Ascending aorta (tissue), 2 donors: ENCODE measurements at regions of chr7 and their contacts with region 1.

Region 1: GRCh38 chr7:25851332-25852210 is 300.4 kb upstream of the NFE2L3 start:
- DNase-seq: peak; percentile 62 to 92
- H3K4me3 ChIP-seq: peak overlapping the region; percentile 27 to 53
- H3K27ac ChIP-seq: peak overlapping the region; percentile 65 to 76
- H3K4me1 ChIP-seq: peaks cover 27 to 54% of the 10 kb centered on the region in 2 donors
- H3K27me3 ChIP-seq: no peaks in the 10 kb centered on the region
- CTCF ChIP-seq: peak; percentile 85 to 89 (median 88)

Region 2: GRCh38 chr7:24979863-24980533 is 871.6 kb before region 1 on chr7 and contains the start of gene OSBPL3:
- intact Hi-C with region 1: loop called (anchors 10 kb)
- DNase-seq: peak; percentile 77 to 97
- H3K4me3 ChIP-seq: peak within 1 kb of the TSS; percentile 66 to 94
- H3K27ac ChIP-seq: peak within 1 kb of the TSS; percentile 66 to 83
- H3K4me1 ChIP-seq: peaks cover 0 to 3% of the 10 kb centered on the region in 2 donors
- H3K27me3 ChIP-seq: no peaks in the 10 kb centered on the region
- CTCF ChIP-seq: no peak
- total RNA-seq, gene OSBPL3: 0.96 TPM

Region 3: GRCh38 chr7:25240340-25240739 is 611.2 kb before region 1 on chr7:
- intact Hi-C with region 1: loop called (anchors 5 kb)
- DNase-seq: peak in 1 of 2 donors; percentile 71
- H3K4me3 ChIP-seq: peak overlapping the region in 1 of 2 donors; percentile 29
- H3K27ac ChIP-seq: no peak overlapping the region
- H3K4me1 ChIP-seq: peaks cover 2 to 14% of the 10 kb centered on the region in 2 donors
- H3K27me3 ChIP-seq: no peaks in the 10 kb centered on the region
- CTCF ChIP-seq: no peak

Region 4: DNA sequence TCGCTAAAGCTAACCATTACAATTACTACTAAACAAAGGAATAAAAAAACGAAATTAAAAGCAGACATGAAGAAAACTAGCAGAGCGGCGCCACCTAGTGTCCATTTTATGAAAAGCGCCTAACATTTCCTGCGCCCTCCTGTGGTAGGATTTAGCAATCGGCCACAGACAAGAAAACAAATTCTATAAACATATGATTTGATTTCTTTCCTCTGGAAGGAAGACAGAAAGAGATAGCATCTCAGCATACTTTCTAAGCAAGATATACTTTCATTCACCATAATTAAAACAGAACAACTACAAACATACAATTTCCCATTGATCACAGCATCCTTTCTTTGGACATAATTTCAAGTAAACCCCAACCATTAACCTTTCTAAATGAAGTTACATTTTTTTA is 285.6 kb before region 1 on chr7:
- intact Hi-C with region 1: loop called (anchors 1 kb)
- DNase-seq: peak in 1 of 2 donors; percentile 73
- H3K4me3 ChIP-seq: no peak overlapping the region
- H3K27ac ChIP-seq: no peak overlapping the region
- H3K4me1 ChIP-seq: no peaks in the 10 kb centered on the region
- H3K27me3 ChIP-seq: no peaks in the 10 kb centered on the region
- CTCF ChIP-seq: peak; percentile 92 to 99 (median 99)

Region 5: GRCh38 chr7:25714013-25714412 is 137.6 kb before region 1 on chr7:
- intact Hi-C with region 1: loop called (anchors 5 kb)
- DNase-seq: no peak
- H3K4me3 ChIP-seq: no peak overlapping the region
- H3K27ac ChIP-seq: peak overlapping the region; percentile 19 to 51
- H3K4me1 ChIP-seq: peaks cover 0 to 22% of the 10 kb centered on the region in 2 donors
- H3K27me3 ChIP-seq: no peaks in the 10 kb centered on the region
- CTCF ChIP-seq: no peak

Region 6: GRCh38 chr7:25951031-25951948 is 99.7 kb after region 1 on chr7:
- intact Hi-C with region 1: loop called (anchors 5 kb)
- DNase-seq: peak; percentile 53 to 94
- H3K4me3 ChIP-seq: peak overlapping the region; percentile 76 to 89
- H3K27ac ChIP-seq: peak overlapping the region; percentile 0 to 56
- H3K4me1 ChIP-seq: peaks cover 7 to 10% of the 10 kb centered on the region in 2 donors
- H3K27me3 ChIP-seq: no peaks in the 10 kb centered on the region
- CTCF ChIP-seq: no peak

Region 7: DNA sequence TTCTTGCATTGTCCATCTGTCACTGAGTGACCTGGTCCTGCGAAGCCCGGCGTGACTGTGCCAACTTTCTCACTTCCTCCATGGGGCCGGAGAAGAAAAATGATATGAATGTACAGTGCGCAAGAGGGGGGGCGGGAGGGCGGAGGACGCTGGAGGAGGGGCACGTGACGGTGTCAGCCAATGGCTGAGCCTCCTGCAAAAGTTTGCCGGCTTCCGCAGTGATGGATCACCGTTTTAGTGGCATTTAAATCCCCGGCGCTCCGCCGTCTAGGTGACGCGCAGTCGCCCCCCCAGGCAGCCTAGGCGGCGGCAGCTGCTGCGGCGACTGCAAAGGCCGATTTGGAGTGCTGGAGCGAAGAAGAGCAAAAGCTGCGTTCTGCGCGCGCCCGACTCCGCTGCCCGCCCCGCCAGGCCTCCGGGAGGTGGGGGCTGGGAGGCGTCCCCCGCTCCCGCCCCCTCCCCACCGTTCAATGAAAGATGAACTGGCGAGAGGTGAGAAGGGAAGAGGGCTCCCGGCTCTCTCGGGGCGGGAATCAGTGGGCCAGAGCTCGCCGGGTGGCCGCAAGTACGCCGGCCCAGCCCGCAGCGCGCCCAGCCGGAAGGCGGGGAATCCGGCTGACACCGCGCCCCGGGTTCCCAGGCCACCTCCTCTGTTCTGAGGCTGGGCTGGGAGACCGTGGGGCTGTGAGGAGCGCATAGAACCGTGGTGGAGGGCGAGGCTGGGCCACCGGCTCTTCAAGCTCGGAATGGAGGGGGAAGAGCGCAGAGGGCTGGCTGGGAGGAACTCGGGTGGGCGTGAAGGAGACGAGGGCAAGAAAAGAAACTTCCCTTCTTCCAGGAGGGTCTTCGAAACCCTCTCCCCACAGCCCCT is 1244.6 kb after region 1 on chr7 and contains the start of gene HOXA1:
- intact Hi-C with region 1: loop called (anchors 1 kb)
- DNase-seq: peak; percentile 44 to 94
- H3K4me3 ChIP-seq: peak within 1 kb of the TSS; percentile 79 to 82
- H3K27ac ChIP-seq: peak within 1 kb of the TSS; percentile 89 to 97
- H3K4me1 ChIP-seq: peaks cover 0 to 18% of the 10 kb centered on the region in 2 donors
- H3K27me3 ChIP-seq: no peaks in the 10 kb centered on the region
- CTCF ChIP-seq: no peak
- total RNA-seq, gene HOXA1: not detected